Heart right ventricle (tissue), 16 donors: ENCODE measurements at regions of chr12 and their contacts with region 1.

Region 1: DNA sequence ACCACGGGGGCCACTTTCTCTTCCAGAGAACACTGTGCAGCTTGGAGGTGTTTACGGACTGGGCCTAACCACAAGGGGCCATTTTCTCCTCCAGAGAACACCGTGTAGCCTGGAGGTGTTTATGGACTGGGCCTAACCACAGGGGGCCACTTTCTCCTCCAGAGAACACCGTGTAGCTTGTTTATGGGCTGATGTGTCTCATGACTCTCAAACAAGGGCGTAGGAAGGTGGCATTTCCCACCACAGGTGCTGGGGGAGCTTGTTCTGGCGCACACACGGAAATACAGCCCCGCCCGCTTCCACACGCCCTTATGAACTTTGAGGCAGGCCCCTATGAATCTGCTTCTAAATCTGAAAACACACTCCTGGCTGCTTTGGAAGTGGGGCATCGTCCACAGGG is 174.6 kb upstream of the SFSWAP start:
- DNase-seq: no peak
- ATAC-seq: no peak
- H3K4me3 ChIP-seq: no peak overlapping the region
- H3K27ac ChIP-seq: no peak overlapping the region
- H3K4me1 ChIP-seq: no peaks in the 10 kb centered on the region
- H3K27me3 ChIP-seq: peaks cover 0 to 26% (median 15%) of the 10 kb centered on the region in 7 donors
- CTCF ChIP-seq: no peak

Region 2: GRCh38 chr12:131482199-131482598 is 54.1 kb before region 1 on chr12:
- intact Hi-C with region 1: loop called in 1 of 10 experiments (anchors 2 kb)
- DNase-seq: no peak
- ATAC-seq: no peak
- H3K4me3 ChIP-seq: no peak overlapping the region
- H3K27ac ChIP-seq: no peak overlapping the region
- H3K4me1 ChIP-seq: no peaks in the 10 kb centered on the region
- H3K27me3 ChIP-seq: peaks cover 0 to 22% (median 8%) of the 10 kb centered on the region in 7 donors
- CTCF ChIP-seq: no peak